CD4-positive, alpha-beta memory T cell (primary cell): ENCODE measurements at regions of chrX and their contacts with region 1.

Region 1: GRCh38 chrX:103686199-103687072 is at the start of gene MORF4L2:
- DNase-seq: peak; percentile 84 to 98 (median 94)
- H3K4me3 ChIP-seq: peak within 1 kb of the TSS; percentile 91 to 94
- H3K4me3 Mint-ChIP-seq: peak within 1 kb of the TSS in 7 of 8 donors; percentile 74 to 83 (median 79)
- H3K27ac ChIP-seq: peak within 1 kb of the TSS; percentile 85
- H3K27ac Mint-ChIP-seq: peak within 1 kb of the TSS; percentile 5 to 90 (median 84)
- H3K4me1 ChIP-seq: peaks cover 21% of the 10 kb centered on the region
- H3K4me1 Mint-ChIP-seq: peaks cover 0 to 15% (median 3%) of the 10 kb centered on the region in 4 donors
- H3K27me3 ChIP-seq: no peaks in the 10 kb centered on the region
- H3K27me3 Mint-ChIP-seq: no peaks in the 10 kb centered on the region
- total RNA-seq, gene MORF4L2: 105 to 110 TPM

Region 2: DNA sequence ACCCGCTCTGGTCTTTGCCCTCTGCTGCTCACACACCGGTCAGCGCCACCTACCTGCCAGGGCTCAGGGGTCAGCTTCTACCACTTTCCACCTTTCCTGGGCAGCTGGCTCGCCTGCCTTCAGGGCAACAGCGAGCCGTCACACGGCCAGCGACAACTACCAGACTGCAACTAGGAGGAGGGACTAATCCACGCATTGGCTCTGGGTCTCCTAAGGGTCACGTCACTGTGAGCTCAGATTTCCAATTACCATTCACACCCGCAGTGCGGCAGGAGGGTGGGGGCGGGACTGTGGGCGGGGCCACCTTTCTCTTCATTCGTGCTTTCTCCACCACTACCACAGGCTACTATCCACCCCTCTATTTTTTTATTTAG is 1530.6 kb before region 1 on chrX and contains the start of gene BEX5:
- CTCF ChIA-PET with region 1: no interaction called
- POLR2A ChIA-PET with region 1: no interaction called
- intact Hi-C with region 1: loop called (anchors 5 kb)
- DNase-seq: peak; percentile 60 to 83 (median 65)
- H3K4me3 ChIP-seq: peak within 1 kb of the TSS; percentile 57 to 74
- H3K4me3 Mint-ChIP-seq: peak within 1 kb of the TSS; percentile 96 to 100 (median 98)
- H3K27ac ChIP-seq: peak within 1 kb of the TSS; percentile 77
- H3K27ac Mint-ChIP-seq: peak within 1 kb of the TSS; percentile 98 to 100 (median 99)
- H3K4me1 ChIP-seq: peaks cover 8% of the 10 kb centered on the region
- H3K4me1 Mint-ChIP-seq: peaks cover 0 to 14% (median 10%) of the 10 kb centered on the region in 4 donors
- H3K27me3 ChIP-seq: no peaks in the 10 kb centered on the region
- H3K27me3 Mint-ChIP-seq: no peaks in the 10 kb centered on the region
- total RNA-seq, gene BEX5: 5.9 to 7.4 TPM

Region 3: DNA sequence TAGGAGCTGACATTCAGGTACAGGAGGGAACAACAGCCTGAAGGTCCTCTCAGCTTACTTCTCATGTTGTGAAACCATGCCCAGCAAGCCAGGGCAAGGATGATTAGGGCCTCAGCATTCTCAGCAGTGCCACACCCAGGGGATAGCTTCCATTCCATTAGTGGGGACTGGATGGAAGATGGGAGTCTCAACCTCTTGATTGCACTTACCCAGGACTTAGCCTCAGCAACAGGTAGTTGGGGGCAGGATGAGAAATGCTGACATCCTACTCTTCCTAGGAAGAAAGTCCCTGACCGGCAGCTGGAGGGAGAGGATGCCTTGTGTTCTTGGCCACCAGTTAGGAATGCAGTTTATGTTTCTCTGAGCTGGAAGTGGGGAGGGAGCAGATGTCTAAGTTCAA is 318.9 kb before region 1 on chrX:
- CTCF ChIA-PET with region 1: no interaction called
- POLR2A ChIA-PET with region 1: no interaction called
- intact Hi-C with region 1: no loop called
- DNase-seq: no peak
- H3K4me3 ChIP-seq: no peak overlapping the region
- H3K4me3 Mint-ChIP-seq: no peak overlapping the region
- H3K27ac ChIP-seq: no peak overlapping the region
- H3K27ac Mint-ChIP-seq: no peak overlapping the region
- H3K4me1 ChIP-seq: no peaks in the 10 kb centered on the region
- H3K4me1 Mint-ChIP-seq: no peaks in the 10 kb centered on the region
- H3K27me3 ChIP-seq: no peaks in the 10 kb centered on the region
- H3K27me3 Mint-ChIP-seq: peaks cover 0 to 2% of the 10 kb centered on the region in 2 donors

Region 4: GRCh38 chrX:103503163-103503852 is 183.1 kb before region 1 on chrX:
- CTCF ChIA-PET with region 1: no interaction called
- POLR2A ChIA-PET with region 1: no interaction called
- intact Hi-C with region 1: no loop called
- DNase-seq: no peak
- H3K4me3 ChIP-seq: no peak overlapping the region
- H3K4me3 Mint-ChIP-seq: no peak overlapping the region
- H3K27ac ChIP-seq: no peak overlapping the region
- H3K27ac Mint-ChIP-seq: no peak overlapping the region
- H3K4me1 ChIP-seq: no peaks in the 10 kb centered on the region
- H3K4me1 Mint-ChIP-seq: no peaks in the 10 kb centered on the region
- H3K27me3 ChIP-seq: no peaks in the 10 kb centered on the region
- H3K27me3 Mint-ChIP-seq: no peaks in the 10 kb centered on the region

Region 5: GRCh38 chrX:103533511-103534216 is 152.8 kb before region 1 on chrX:
- CTCF ChIA-PET with region 1: no interaction called
- POLR2A ChIA-PET with region 1: no interaction called
- intact Hi-C with region 1: loop called (anchors 1 kb)
- DNase-seq: peak; percentile 53 to 60 (median 60)
- H3K4me3 ChIP-seq: no peak overlapping the region
- H3K4me3 Mint-ChIP-seq: peak overlapping the region in 5 of 8 donors; percentile 40 to 82 (median 70)
- H3K27ac ChIP-seq: no peak overlapping the region
- H3K27ac Mint-ChIP-seq: no peak overlapping the region
- H3K4me1 ChIP-seq: peaks cover 4% of the 10 kb centered on the region
- H3K4me1 Mint-ChIP-seq: peaks cover 4% of the 10 kb centered on the region in 4 donors
- H3K27me3 ChIP-seq: no peaks in the 10 kb centered on the region
- H3K27me3 Mint-ChIP-seq: peaks cover 0 to 5% of the 10 kb centered on the region in 2 donors

Region 6: GRCh38 chrX:103629318-103630170 is 56.9 kb before region 1 on chrX:
- CTCF ChIA-PET with region 1: no interaction called
- POLR2A ChIA-PET with region 1: interaction called, 6 read pairs
- intact Hi-C with region 1: loop called (anchors 2 kb)
- DNase-seq: peak; percentile 6 to 34 (median 10)
- H3K4me3 ChIP-seq: peak overlapping the region; percentile 36 to 67
- H3K4me3 Mint-ChIP-seq: peak overlapping the region; percentile 75 to 94 (median 84)
- H3K27ac ChIP-seq: peak overlapping the region; percentile 64
- H3K27ac Mint-ChIP-seq: peak overlapping the region; percentile 41 to 95 (median 86)
- H3K4me1 ChIP-seq: peaks cover 12% of the 10 kb centered on the region
- H3K4me1 Mint-ChIP-seq: peaks cover 7 to 17% (median 13%) of the 10 kb centered on the region in 4 donors
- H3K27me3 ChIP-seq: no peaks in the 10 kb centered on the region
- H3K27me3 Mint-ChIP-seq: no peaks in the 10 kb centered on the region

Region 7: DNA sequence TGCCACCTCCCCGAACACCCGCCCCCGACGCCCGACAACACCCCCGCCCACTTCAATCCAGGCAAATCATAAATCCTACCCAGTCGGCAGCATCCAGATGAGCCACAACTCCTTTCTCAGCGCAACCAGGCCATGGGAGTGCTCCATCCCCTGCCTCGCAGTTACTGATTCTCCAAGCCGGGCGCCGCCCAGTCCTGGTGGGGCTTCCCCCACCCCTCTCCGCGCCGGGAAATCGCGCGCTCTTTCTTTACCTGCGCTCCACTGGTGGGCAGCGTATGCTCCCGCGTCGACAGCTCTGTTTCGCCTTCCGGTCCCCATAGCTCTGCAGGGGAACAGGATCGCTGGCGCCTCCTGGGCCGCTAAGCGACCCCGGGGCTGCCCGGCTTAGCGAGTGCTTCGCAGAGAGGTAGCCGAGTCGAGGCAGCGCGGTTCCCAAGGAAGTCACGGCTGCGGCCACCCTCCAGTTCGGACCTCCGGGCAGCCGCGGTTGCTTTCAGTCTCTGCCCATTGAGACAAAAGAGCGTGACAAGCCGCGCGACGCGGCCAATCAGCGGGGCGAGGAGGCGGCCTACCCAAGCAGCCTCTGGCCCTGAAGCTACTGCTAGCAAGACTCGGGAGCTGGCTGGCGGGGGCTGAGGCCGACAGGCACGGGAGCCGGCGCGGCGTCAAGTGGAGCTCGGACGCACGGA is 232.3 kb after region 1 on chrX:
- CTCF ChIA-PET with region 1: no interaction called
- POLR2A ChIA-PET with region 1: interaction called, 7 read pairs
- intact Hi-C with region 1: loop called (anchors 2 kb)
- DNase-seq: peak; percentile 55 to 73 (median 62)
- H3K4me3 ChIP-seq: peak overlapping the region; percentile 36 to 70
- H3K4me3 Mint-ChIP-seq: peak overlapping the region; percentile 88 to 97 (median 94)
- H3K27ac ChIP-seq: peak overlapping the region; percentile 74
- H3K27ac Mint-ChIP-seq: peak overlapping the region; percentile 86 to 96 (median 91)
- H3K4me1 ChIP-seq: peaks cover 27% of the 10 kb centered on the region
- H3K4me1 Mint-ChIP-seq: peaks cover 21 to 35% (median 30%) of the 10 kb centered on the region in 4 donors
- H3K27me3 ChIP-seq: no peaks in the 10 kb centered on the region
- H3K27me3 Mint-ChIP-seq: no peaks in the 10 kb centered on the region

Region 8: DNA sequence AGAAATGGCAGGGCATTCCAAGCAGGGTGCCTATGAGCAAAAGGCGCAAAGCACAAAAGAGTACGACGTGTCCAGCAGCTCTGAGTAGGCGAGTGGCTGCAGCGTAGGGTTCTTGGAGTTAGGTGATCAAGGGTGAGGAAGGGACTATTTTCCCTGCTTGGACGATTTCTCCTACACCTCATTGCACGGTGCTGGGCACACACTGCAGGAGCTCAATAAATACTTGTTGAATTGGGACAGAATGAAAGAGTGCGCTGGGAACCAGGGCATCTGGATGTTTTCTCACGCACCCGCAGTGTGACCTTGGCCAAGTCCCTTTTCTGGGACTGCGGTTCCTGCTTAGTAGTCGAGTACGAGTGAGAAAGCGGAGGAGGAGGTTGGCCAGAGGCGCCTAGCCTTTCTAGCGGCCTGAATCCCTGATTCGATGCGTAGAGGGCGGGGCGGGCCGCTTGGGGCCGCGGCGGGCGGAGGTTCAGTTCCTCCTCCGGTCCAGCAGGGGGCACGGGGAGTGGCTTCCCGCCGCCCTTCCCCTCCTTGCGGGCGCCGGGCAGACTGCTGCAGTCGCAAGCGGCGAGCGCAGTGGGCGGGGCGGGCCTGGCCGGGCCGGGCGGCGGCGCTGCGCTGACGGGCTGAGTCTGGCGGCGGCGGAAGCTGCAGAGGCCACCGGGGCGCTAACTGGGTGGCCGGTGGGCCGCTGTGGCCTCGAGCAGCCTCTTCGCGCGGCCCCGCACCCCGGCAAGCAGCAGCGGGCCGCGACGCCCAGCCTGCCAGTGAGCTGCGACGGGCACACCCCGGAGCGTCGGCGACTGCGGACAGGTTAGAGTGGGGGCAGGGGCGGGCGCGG is 479.7 kb after region 1 on chrX and contains the start of gene FAM199X:
- CTCF ChIA-PET with region 1: no interaction called
- POLR2A ChIA-PET with region 1: no interaction called
- intact Hi-C with region 1: loop called (anchors 2 kb)
- DNase-seq: peak; percentile 80 to 84 (median 83)
- H3K4me3 ChIP-seq: peak within 1 kb of the TSS; percentile 36 to 63
- H3K4me3 Mint-ChIP-seq: peak within 1 kb of the TSS; percentile 83 to 93 (median 88)
- H3K27ac ChIP-seq: peak within 1 kb of the TSS; percentile 76
- H3K27ac Mint-ChIP-seq: peak within 1 kb of the TSS; percentile 88 to 96 (median 95)
- H3K4me1 ChIP-seq: peaks cover 33% of the 10 kb centered on the region
- H3K4me1 Mint-ChIP-seq: peaks cover 22 to 39% (median 31%) of the 10 kb centered on the region in 4 donors
- H3K27me3 ChIP-seq: no peaks in the 10 kb centered on the region
- H3K27me3 Mint-ChIP-seq: no peaks in the 10 kb centered on the region
- total RNA-seq, gene FAM199X: 19.6 to 19.9 TPM